WTC11 (cell line): ENCODE measurements at regions of chr11 and their contacts with region 1.

Region 1: GRCh38 chr11:70104419-70104818 is 26.3 kb downstream of the ANO1 start:
- DNase-seq: no peak
- ATAC-seq: no peak
- H3K4me3 Mint-ChIP-seq: no peak overlapping the region
- H3K27ac Mint-ChIP-seq: peak overlapping the region; percentile 68; the same call in 1 of the 2 replicates
- H3K4me1 Mint-ChIP-seq: peaks cover 13% of the 10 kb centered on the region
- H3K27me3 Mint-ChIP-seq: no peaks in the 10 kb centered on the region
- CTCF ChIP-seq: no peak

Region 2: GRCh38 chr11:70065328-70066151 is 38.9 kb before region 1 on chr11:
- CTCF ChIA-PET with region 1: no interaction called
- POLR2A ChIA-PET with region 1: no interaction called
- DNase-seq: no peak
- ATAC-seq: no peak
- H3K4me3 Mint-ChIP-seq: no peak overlapping the region
- H3K27ac Mint-ChIP-seq: no peak overlapping the region; the same call in 1 of the 2 replicates
- H3K4me1 Mint-ChIP-seq: peaks cover 33% of the 10 kb centered on the region
- H3K27me3 Mint-ChIP-seq: no peaks in the 10 kb centered on the region; the same call in 1 of the 2 replicates
- CTCF ChIP-seq: no peak

Region 3: GRCh38 chr11:70176940-70177689 is 72.7 kb after region 1 on chr11:
- CTCF ChIA-PET with region 1: interaction called, 10 read pairs
- POLR2A ChIA-PET with region 1: no interaction called
- DNase-seq: peak; percentile 90
- ATAC-seq: peak; percentile 75
- H3K4me3 Mint-ChIP-seq: no peak overlapping the region
- H3K27ac Mint-ChIP-seq: no peak overlapping the region
- H3K4me1 Mint-ChIP-seq: peaks cover 24% of the 10 kb centered on the region
- H3K27me3 Mint-ChIP-seq: no peaks in the 10 kb centered on the region
- CTCF ChIP-seq: peak; percentile 90

Region 4: DNA sequence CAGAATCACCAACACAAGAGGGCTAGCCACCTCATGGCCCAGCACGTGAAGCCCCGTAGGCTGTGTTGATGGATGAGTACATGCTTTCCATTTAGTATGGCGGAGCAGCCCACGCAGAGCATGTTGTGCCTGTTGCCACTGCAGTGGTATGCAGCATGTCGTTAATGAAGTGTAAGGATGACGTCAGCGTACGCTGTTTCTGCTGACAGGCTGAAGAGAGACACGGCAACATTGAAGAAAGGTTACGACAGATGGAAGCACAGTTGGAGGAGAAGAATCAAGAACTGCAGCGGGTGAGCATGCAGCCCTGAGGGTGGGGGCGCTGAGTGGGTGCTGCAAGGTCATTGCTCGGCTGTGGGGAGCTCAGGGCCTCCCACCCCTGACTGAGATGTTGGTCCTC is 228.8 kb after region 1 on chr11:
- CTCF ChIA-PET with region 1: no interaction called
- POLR2A ChIA-PET with region 1: no interaction called
- DNase-seq: no peak
- ATAC-seq: no peak
- H3K4me3 Mint-ChIP-seq: no peak overlapping the region
- H3K27ac Mint-ChIP-seq: peak overlapping the region; percentile 19; the same call in 1 of the 2 replicates
- H3K4me1 Mint-ChIP-seq: no peaks in the 10 kb centered on the region
- H3K27me3 Mint-ChIP-seq: no peaks in the 10 kb centered on the region
- CTCF ChIP-seq: no peak